ENCODE measurements at regions of chr13 and their contacts with region 1.

Region 1: DNA sequence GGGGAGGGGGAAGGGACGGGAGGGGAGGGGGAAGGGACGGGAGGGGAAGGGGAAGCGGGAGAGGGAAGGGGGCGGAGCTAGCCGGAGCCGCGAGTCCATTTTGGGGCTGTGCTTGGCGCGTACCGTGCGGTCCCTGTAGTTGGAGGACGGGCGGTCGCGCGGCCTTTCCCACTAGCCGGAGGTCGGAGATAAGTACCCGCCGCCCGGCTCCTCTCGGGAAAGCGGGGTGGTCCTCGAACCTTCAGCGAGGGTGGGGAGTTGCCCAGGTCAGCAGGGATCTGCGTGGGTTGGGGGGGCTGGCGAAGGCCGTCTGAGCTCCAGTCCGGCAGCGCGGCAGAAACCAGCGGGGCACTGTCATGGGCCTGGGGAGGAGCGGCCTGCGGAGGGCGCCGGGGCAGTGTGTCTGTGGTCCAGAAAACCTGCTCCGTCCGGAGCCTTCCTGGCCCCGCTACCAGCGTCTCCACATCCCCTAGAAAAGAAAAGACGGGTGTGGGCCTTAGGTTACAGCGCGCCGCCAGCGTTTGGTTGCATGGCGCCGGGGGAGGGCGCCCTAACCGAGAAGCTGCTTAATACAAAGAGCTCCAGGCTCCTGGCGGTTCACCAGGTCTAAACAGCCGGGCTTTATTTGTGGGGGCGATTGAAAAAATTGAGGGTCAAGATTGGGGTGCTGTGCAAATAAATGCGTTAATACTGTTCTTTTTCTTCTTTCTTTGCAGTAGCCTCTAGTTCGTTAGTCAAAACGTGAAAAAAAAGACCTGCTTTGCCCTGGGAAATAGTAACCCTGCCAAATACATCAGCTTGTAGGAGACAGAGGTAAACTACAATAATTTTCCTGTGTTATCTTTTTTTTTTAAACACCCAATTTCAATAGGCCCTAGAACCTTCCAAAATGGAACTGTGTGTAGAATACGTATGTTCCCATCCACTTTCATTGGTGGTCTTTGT is at the start of gene TRIM13:
- DNase-seq: peak; percentile 95
- total RNA-seq, gene TRIM13: 19.2 TPM

Region 2: GRCh38 chr13:49936085-49936940 is 60.9 kb before region 1 on chr13 and contains the start of gene SPRYD7:
- intact Hi-C with region 1: loop called (anchors 5 kb)
- DNase-seq: peak; percentile 100
- total RNA-seq, gene SPRYD7: 13.0 TPM

Region 3: GRCh38 chr13:50081679-50082425 is 84.6 kb after region 1 on chr13:
- intact Hi-C with region 1: loop called (anchors 1 kb)
- DNase-seq: peak; percentile 99

Region 4: GRCh38 chr13:50123862-50124536 is 126.8 kb after region 1 on chr13:
- intact Hi-C with region 1: loop called (anchors 2 kb)
- DNase-seq: peak; percentile 95

Region 5: DNA sequence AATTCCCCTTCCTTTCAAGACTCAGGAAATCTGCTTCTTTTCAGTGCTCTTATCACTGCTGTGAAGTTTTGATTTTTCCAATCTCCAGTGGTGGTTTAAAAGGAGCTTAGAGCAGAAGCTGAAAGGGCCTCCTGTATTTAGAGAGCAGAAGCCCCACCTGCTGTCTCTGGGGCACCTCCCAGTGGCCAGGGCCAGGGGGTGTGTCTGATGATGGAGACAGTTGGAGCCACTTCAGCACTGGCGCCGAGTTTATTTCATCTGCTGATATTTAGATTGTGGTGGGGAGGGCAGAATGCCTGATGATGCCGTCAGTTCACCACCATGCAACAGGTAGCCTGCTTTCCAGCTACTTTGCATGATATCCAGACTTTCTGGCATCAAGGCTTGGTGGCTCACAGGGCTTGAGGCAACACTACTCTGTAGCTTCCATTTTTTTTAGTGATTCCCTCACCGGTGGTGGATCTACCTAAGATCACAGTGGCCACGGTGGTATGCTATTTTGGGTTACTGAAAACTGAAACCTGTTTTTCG is 389.9 kb after region 1 on chr13:
- intact Hi-C with region 1: loop called (anchors 10 kb)
- DNase-seq: peak; percentile 86

Region 6: GRCh38 chr13:50529154-50529882 is 532.1 kb after region 1 on chr13:
- intact Hi-C with region 1: loop called (anchors 5 kb)
- DNase-seq: peak; percentile 88

Region 7: GRCh38 chr13:50911937-50912795 is 914.9 kb after region 1 on chr13:
- intact Hi-C with region 1: loop called (anchors 2 kb)
- DNase-seq: peak; percentile 92

Measured in cardiac septum (tissue), 1 donor.